Activated T-helper 1 cell treated with anti-CD3 and anti-CD28 coated beads, Interleukin-12 subunit alpha, Interleukin-12 subunit beta, Interleukin-2, Interleukin-4 antibody, amounts not matched to agents 30 ng/mL and 10 ng/mL and 1 ng/mL, durations not matched to agents 14 hours and 24 hours and 36 hours (primary cell): ENCODE measurements at regions of chrX and their contacts with region 1.

Region 1: DNA sequence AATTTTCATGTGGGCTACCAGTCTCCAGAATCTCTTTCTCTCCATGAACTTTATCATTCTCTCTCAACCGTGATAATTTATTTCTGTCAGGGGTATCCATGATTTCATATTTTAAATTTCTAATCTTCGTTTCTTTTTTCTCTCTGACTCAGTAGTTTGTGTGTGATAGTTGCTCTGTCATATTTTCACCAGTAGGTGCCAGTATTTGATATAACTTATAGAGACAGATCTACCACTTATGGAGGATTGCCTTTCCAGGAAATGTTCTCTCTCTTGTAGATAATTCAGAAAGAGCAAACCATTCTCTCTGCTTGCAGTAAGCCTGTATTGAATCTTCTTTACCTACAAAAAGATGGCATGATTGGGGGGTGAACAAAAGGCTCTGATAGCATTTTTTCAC is 79.3 kb upstream of the DYNLT3 start:
- DNase-seq: no peak
- H3K4me3 Mint-ChIP-seq: no peak overlapping the region
- H3K27ac Mint-ChIP-seq: no peak overlapping the region
- H3K4me1 Mint-ChIP-seq: no peaks in the 10 kb centered on the region
- H3K27me3 Mint-ChIP-seq: peaks cover 5% of the 10 kb centered on the region

Region 2: DNA sequence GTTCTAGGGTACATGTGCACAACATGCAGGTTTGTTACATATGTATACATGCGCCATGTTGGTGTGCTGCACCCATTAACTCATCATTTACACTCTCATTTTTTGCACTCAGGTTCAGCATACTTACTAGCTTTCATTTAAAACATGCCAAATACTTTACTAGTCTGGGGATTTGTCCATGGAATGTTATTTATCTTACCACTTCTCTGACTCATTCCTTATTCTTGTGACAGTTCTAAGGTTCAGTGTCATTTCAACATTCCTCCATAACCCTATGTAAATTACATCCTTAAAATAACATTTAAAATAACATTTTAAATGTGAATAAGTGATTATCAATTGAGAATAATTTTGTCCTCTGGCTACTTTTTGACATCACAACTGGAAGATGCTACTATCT is 60.2 kb after region 1 on chrX:
- intact Hi-C with region 1: loop called (anchors 5 kb)
- DNase-seq: no peak
- H3K4me3 Mint-ChIP-seq: no peak overlapping the region
- H3K27ac Mint-ChIP-seq: no peak overlapping the region
- H3K4me1 Mint-ChIP-seq: no peaks in the 10 kb centered on the region
- H3K27me3 Mint-ChIP-seq: no peaks in the 10 kb centered on the region